Activated CD4-positive, alpha-beta memory T cell treated with anti-CD3 and anti-CD28 coated beads for 36 hours (primary cell): ENCODE measurements at regions of chr18 and their contacts with region 1.

Region 1: GRCh38 chr18:267688-268552 is at the start of gene THOC1:
- DNase-seq: peak; percentile 98
- H3K4me3 Mint-ChIP-seq: peak within 1 kb of the TSS; percentile 99
- H3K27ac Mint-ChIP-seq: peak within 1 kb of the TSS; percentile 100
- H3K4me1 Mint-ChIP-seq: peaks cover 26% of the 10 kb centered on the region
- H3K27me3 Mint-ChIP-seq: no peaks in the 10 kb centered on the region
- total RNA-seq, gene THOC1: 54.0 to 57.9 TPM

Region 2: GRCh38 chr18:111292-112014 is 156.5 kb before region 1 on chr18:
- CTCF ChIA-PET with region 1: no interaction called
- POLR2A ChIA-PET with region 1: no interaction called
- intact Hi-C with region 1: loop called (anchors 5 kb)
- DNase-seq: peak; percentile 80
- H3K4me3 Mint-ChIP-seq: peak overlapping the region; percentile 73
- H3K27ac Mint-ChIP-seq: peak overlapping the region; percentile 86
- H3K4me1 Mint-ChIP-seq: peaks cover 12% of the 10 kb centered on the region
- H3K27me3 Mint-ChIP-seq: no peaks in the 10 kb centered on the region

Region 3: DNA sequence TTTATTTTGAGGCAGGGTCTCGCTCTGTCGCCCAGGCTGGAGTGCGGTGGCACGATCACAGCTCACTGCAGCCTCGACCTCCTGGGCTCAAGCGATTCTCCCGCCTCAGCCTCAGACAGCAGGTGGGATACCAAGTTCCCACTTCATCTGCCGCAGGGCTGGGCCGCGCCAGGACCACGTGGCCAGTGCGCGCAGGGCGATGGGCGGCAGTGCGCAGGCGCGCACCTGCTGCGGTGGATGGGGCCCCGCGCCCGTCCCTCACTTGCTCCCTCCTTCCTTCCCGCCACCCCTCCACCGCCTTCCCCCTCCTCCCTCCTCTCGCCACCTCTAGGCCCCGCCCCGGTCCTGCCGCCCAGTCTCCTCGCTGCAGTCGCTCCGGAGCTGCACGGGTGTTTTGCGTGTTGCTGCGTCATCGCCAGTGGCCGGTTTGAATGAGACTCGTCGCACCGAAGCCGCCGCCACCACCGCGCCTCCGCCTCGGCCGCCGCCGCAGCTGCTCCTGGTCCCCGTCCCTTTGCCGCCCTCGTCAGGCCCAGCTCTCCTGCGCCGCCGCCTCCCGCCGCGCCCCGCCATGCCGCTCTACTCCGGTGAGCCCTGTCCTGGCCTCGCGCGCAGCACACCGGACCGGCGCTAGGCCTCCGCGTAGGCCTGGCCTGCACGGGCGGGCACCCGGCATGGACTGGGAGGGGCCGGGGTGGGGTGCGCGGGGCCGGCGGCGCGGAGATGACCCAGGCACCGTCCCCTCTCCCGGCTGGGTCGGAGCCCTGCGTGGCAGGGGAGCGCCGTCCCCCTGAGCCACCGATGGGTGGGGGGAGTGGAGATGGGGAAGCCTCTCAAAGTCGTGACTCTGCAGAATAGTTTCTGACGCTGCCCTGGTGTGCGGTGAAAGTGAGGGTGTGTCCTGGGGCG is 109.5 kb before region 1 on chr18 and contains the start of gene USP14:
- CTCF ChIA-PET with region 1: interaction called, 4 read pairs
- POLR2A ChIA-PET with region 1: interaction called, 18 read pairs
- intact Hi-C with region 1: loop called (anchors 1 kb)
- DNase-seq: peak; percentile 99
- H3K4me3 Mint-ChIP-seq: peak within 1 kb of the TSS; percentile 86
- H3K27ac Mint-ChIP-seq: peak within 1 kb of the TSS; percentile 93
- H3K4me1 Mint-ChIP-seq: peaks cover 27% of the 10 kb centered on the region
- H3K27me3 Mint-ChIP-seq: no peaks in the 10 kb centered on the region
- total RNA-seq, gene USP14: 88.2 to 90.8 TPM

Region 4: GRCh38 chr18:289026-289425 is 21.1 kb after region 1 on chr18:
- CTCF ChIA-PET with region 1: no interaction called
- POLR2A ChIA-PET with region 1: no interaction called
- intact Hi-C with region 1: no loop called
- DNase-seq: no peak
- H3K4me3 Mint-ChIP-seq: no peak overlapping the region
- H3K27ac Mint-ChIP-seq: no peak overlapping the region
- H3K4me1 Mint-ChIP-seq: peaks cover 7% of the 10 kb centered on the region
- H3K27me3 Mint-ChIP-seq: peaks cover 11% of the 10 kb centered on the region

Region 5: GRCh38 chr18:434410-434809 is 166.5 kb after region 1 on chr18:
- CTCF ChIA-PET with region 1: no interaction called
- POLR2A ChIA-PET with region 1: no interaction called
- intact Hi-C with region 1: no loop called
- DNase-seq: no peak
- H3K4me3 Mint-ChIP-seq: no peak overlapping the region
- H3K27ac Mint-ChIP-seq: no peak overlapping the region
- H3K4me1 Mint-ChIP-seq: no peaks in the 10 kb centered on the region
- H3K27me3 Mint-ChIP-seq: peaks cover 1% of the 10 kb centered on the region

Region 6: GRCh38 chr18:596288-596881 is 328.5 kb after region 1 on chr18:
- CTCF ChIA-PET with region 1: no interaction called
- POLR2A ChIA-PET with region 1: no interaction called
- intact Hi-C with region 1: loop called (anchors 1 kb)
- DNase-seq: no peak
- H3K4me3 Mint-ChIP-seq: no peak overlapping the region
- H3K27ac Mint-ChIP-seq: no peak overlapping the region
- H3K4me1 Mint-ChIP-seq: peaks cover 5% of the 10 kb centered on the region
- H3K27me3 Mint-ChIP-seq: peaks cover 18% of the 10 kb centered on the region